ENCODE measurements at regions of chr15 and their contacts with region 1.

Region 1: DNA sequence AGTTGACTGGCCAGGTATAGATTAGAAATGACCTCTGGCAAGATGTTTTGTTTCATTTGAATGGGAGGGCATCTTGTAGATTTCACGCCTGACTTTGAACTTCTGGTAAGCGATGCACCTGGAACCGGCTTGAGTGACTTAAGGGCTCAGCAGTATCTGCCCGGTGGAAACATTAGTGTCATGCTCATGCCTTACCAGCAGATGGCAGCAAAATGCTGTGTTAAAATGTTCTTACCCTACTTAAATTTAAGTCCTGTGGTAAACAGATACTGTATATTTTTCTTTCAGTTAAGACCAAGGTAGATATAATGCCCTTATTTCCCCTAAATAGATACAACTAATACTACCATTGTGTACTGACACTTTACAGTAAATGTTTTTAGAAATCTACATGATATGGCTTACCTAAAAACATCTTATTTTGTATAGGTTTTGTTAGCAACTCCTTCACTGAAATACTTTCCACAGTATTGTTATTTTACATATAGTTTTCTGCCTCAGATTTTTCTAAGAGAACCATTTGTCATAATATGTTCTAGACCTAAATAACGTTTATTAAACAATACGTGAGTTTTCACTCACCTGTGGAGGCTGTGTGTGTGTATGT is 25.5 kb downstream of the ASB7 start:
- DNase-seq: peak; percentile 58 to 84
- ATAC-seq: peak; percentile 88 to 95
- H3K4me3 ChIP-seq: no peak overlapping the region
- H3K27ac ChIP-seq: no peak overlapping the region
- H3K4me1 ChIP-seq: no peaks in the 10 kb centered on the region
- CTCF ChIP-seq: peak; percentile 96
- EP300 ChIP-seq: no peak
- POLR2A ChIP-seq: no peak
- RAD21 ChIP-seq: peak; percentile 93

Region 2: GRCh38 chr15:100468285-100468684 is 159.6 kb before region 1 on chr15:
- CTCF ChIA-PET with region 1: no interaction called
- POLR2A ChIA-PET with region 1: no interaction called
- DNase-seq: peak in 1 of 2 experiments; percentile 4
- ATAC-seq: no peak
- H3K4me3 ChIP-seq: no peak overlapping the region
- H3K27ac ChIP-seq: no peak overlapping the region
- H3K4me1 ChIP-seq: no peaks in the 10 kb centered on the region
- CTCF ChIP-seq: no peak
- EP300 ChIP-seq: no peak
- POLR2A ChIP-seq: no peak
- RAD21 ChIP-seq: no peak

Region 3: GRCh38 chr15:100614918-100615317 is 13.0 kb before region 1 on chr15:
- CTCF ChIA-PET with region 1: interaction called, 22 read pairs
- POLR2A ChIA-PET with region 1: no interaction called
- DNase-seq: no peak
- ATAC-seq: no peak
- H3K4me3 ChIP-seq: no peak overlapping the region
- H3K27ac ChIP-seq: no peak overlapping the region
- H3K4me1 ChIP-seq: no peaks in the 10 kb centered on the region
- CTCF ChIP-seq: no peak
- EP300 ChIP-seq: no peak
- POLR2A ChIP-seq: no peak
- RAD21 ChIP-seq: no peak

Region 4: DNA sequence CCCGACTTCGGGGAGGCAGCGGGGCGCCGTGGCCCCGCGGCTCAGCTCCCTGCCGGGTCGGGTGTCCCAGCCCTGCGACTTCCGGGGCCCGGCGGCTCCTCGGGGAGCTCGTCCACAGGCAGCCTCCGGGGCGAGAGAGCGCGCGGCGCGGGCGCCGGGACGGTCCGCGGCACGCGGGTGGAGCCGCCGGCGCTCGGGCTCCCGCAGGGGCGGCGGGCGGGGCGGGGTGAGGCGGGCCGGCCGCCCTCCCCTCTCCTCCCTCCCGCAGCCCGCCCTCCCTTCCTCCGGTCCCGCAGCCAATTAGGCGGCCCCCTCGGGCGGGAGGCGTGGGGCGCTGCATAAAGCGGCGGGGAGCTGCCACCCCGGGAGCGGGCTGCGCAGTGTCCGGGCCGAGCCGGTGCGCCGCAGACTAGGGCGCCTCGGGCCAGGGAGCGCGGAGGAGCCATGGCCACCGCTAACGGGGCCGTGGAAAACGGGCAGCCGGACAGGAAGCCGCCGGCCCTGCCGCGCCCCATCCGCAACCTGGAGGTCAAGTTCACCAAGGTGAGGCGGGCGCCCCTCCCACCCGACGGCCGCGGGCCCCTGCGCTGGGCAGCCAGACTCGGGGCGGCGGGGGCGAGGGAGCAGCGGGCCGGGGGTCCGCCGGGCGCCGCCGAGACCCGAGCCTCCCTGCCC is 251.7 kb after region 1 on chr15 and contains the start of gene ALDH1A3:
- CTCF ChIA-PET with region 1: interaction called, 10 read pairs
- POLR2A ChIA-PET with region 1: no interaction called
- DNase-seq: peak; percentile 65 to 89
- ATAC-seq: peak; percentile 81 to 91
- H3K4me3 ChIP-seq: peak within 1 kb of the TSS; percentile 75
- H3K27ac ChIP-seq: peak within 1 kb of the TSS; percentile 84 to 91
- H3K4me1 ChIP-seq: peaks cover 5% of the 10 kb centered on the region
- CTCF ChIP-seq: no peak
- EP300 ChIP-seq: no peak
- POLR2A ChIP-seq: peak; percentile 84
- RAD21 ChIP-seq: no peak; a peak in 1 of 5 replicates
- polyA plus RNA-seq, gene ALDH1A3: 9.3 and 11.9 TPM in 2 replicates

Measured in A549 (cell line).